Activated CD8-positive, alpha-beta T cell treated with anti-CD3 and anti-CD28 coated beads, Interleukin-2, amount 10 ng/mL, durations not matched to agents 7 days and 5 days (primary cell): ENCODE measurements at regions of chr17 and their contacts with region 1.

Region 1: DNA sequence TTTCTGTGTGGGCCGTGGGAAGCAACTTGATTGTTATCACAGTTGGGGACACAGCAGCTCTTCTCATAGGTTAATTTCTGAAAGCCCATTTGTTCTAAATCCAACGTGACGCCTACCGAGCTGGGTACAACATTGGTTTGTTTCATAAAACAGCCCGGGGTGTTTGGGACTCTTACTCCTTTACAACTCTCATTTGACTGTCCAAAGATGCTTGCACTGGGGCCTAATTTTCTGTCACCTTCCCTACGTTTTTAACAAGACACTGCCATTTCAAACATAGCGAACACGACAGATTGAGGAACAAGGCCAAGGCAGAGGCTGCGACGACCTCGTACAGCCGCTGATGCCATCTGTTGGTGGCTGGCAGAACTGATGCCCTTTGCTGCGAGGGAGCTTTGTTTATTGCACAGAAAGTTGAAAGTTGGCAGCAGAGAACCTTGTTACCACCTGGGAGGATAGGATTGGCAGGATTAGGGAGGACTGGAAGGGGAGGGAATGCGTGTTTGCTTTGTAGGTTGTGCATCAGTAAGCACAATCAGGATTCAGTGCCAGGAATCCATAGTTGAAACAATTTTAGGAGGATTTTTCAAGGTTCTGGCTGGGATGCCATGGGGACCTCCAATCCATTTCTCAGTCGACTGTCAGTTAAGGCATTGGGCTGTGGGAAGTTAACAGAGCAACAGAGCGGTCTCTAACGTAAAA is 98.3 kb downstream of the PITPNC1 start:
- DNase-seq: peak; percentile 91
- ATAC-seq: peak; percentile 76
- H3K4me3 Mint-ChIP-seq: peak overlapping the region; percentile 72
- H3K27ac Mint-ChIP-seq: peak overlapping the region; percentile 94
- H3K4me1 Mint-ChIP-seq: peaks cover 72% of the 10 kb centered on the region
- H3K27me3 Mint-ChIP-seq: no peaks in the 10 kb centered on the region

Region 2: GRCh38 chr17:67180275-67180674 is 295.1 kb before region 1 on chr17:
- CTCF ChIA-PET with region 1: no interaction called
- POLR2A ChIA-PET with region 1: no interaction called
- DNase-seq: no peak
- ATAC-seq: no peak
- H3K4me3 Mint-ChIP-seq: no peak overlapping the region
- H3K27ac Mint-ChIP-seq: no peak overlapping the region
- H3K4me1 Mint-ChIP-seq: no peaks in the 10 kb centered on the region
- H3K27me3 Mint-ChIP-seq: no peaks in the 10 kb centered on the region

Region 3: GRCh38 chr17:67293251-67294203 is 181.9 kb before region 1 on chr17:
- CTCF ChIA-PET with region 1: no interaction called
- POLR2A ChIA-PET with region 1: no interaction called
- DNase-seq: peak; percentile 83
- ATAC-seq: peak; percentile 99
- H3K4me3 Mint-ChIP-seq: peak overlapping the region; percentile 12
- H3K27ac Mint-ChIP-seq: no peak overlapping the region
- H3K4me1 Mint-ChIP-seq: peaks cover 7% of the 10 kb centered on the region
- H3K27me3 Mint-ChIP-seq: no peaks in the 10 kb centered on the region

Region 4: GRCh38 chr17:67390646-67391384 is 84.6 kb before region 1 on chr17:
- CTCF ChIA-PET with region 1: interaction called, 181 read pairs
- POLR2A ChIA-PET with region 1: interaction called, 24 read pairs
- DNase-seq: peak; percentile 82
- ATAC-seq: peak; percentile 91
- H3K4me3 Mint-ChIP-seq: peak overlapping the region; percentile 71
- H3K27ac Mint-ChIP-seq: peak overlapping the region; percentile 93
- H3K4me1 Mint-ChIP-seq: peaks cover 69% of the 10 kb centered on the region
- H3K27me3 Mint-ChIP-seq: no peaks in the 10 kb centered on the region

Region 5: GRCh38 chr17:67421869-67422273 is 53.5 kb before region 1 on chr17:
- CTCF ChIA-PET with region 1: interaction called, 24 read pairs
- POLR2A ChIA-PET with region 1: interaction called, 7 read pairs
- DNase-seq: peak; percentile 80
- ATAC-seq: peak; percentile 95
- H3K4me3 Mint-ChIP-seq: peak overlapping the region; percentile 51
- H3K27ac Mint-ChIP-seq: peak overlapping the region; percentile 95
- H3K4me1 Mint-ChIP-seq: peaks cover 72% of the 10 kb centered on the region
- H3K27me3 Mint-ChIP-seq: no peaks in the 10 kb centered on the region

Region 6: DNA sequence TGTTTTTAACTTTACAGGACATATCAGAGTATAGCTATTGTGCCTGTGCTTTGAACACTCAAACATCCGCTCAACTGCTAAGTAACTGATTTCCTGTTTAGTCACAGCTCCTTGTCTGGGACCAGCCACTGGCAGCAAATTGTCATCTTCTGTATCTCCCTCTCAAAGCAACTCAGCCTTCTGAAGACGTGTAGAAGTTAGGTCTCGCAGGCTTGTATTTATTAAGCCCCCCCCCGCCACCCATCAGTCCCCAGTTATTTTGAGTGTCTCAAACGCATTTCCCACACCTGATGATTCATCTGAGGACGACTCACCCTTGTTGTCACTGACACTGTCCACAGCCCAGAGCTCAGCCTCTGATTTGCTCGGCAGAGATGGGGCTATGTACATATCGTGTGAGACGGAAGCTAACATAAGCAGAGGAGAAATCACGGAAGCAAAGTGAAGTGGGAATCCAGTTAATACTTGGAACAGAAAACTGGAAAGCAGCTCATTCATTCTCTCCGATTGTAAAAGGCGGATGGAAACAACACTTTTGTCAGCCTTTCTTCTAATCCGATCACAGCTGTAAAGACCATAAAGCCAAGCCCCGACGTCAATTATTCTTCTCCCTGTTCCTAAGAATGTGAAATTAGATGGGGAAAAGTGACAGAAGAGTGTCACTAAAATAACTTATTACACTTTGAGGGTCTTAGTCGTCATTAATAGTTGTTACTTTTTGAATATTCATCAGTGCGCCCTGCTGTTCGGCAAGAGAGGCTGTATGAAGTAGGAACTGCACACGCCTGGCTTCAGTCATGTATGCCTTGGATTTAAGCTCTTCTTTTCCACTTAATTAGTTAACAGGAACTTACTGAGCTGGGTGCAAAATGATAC is 34.1 kb before region 1 on chr17:
- CTCF ChIA-PET with region 1: interaction called, 110 read pairs
- POLR2A ChIA-PET with region 1: interaction called, 124 read pairs
- DNase-seq: peak; percentile 84
- ATAC-seq: peak; percentile 96
- H3K4me3 Mint-ChIP-seq: peak overlapping the region; percentile 67
- H3K27ac Mint-ChIP-seq: peak overlapping the region; percentile 94
- H3K4me1 Mint-ChIP-seq: peaks cover 71% of the 10 kb centered on the region
- H3K27me3 Mint-ChIP-seq: no peaks in the 10 kb centered on the region

Region 7: GRCh38 chr17:67459870-67460455 is 15.4 kb before region 1 on chr17:
- CTCF ChIA-PET with region 1: interaction called, 57 read pairs
- POLR2A ChIA-PET with region 1: interaction called, 6 read pairs
- DNase-seq: no peak
- ATAC-seq: no peak
- H3K4me3 Mint-ChIP-seq: no peak overlapping the region
- H3K27ac Mint-ChIP-seq: no peak overlapping the region
- H3K4me1 Mint-ChIP-seq: peaks cover 74% of the 10 kb centered on the region
- H3K27me3 Mint-ChIP-seq: no peaks in the 10 kb centered on the region